SK-N-SH (cell line): ENCODE measurements at regions of chr7 and their contacts with region 1.

Region 1: DNA sequence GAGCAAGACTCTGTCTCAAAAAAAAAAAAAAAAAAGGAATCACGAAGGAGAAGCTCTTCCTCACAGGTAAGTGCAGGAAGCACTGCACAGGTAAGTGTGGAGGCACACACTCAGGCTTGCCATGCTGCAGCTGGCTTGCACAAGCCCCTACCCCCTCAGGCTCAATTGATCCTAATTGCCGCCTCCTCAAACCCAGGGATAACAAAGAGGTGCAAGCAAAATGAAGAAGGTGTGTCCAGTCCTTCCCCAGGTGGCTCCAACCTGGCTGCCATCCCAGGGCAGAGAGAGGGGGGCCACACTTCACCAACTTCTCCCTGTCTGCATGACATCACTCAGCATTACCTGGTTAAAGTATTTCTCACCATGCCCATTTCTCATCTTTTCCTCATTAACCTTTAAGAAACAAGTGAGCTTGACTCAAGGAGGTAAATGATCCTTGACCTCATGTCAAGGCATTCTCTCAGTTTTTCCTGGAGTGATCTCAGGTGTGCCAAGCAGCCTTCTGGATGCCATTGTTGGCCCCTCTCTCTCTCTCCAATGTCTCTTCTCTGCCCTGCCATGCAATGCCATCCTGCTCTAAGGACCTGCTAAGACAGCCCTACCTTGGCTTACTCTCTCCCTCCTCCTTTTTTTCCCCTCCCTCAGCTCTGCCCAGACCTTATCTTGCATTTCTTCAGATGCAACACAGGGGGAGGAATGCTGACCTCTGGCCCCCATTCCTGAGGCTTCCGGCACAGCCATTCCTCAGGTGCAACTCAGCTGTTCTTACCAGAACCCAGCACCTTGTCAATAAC is 13.0 kb upstream of the TRPV6 start:
- DNase-seq: no peak
- H3K4me3 ChIP-seq: no peak overlapping the region
- H3K27ac ChIP-seq: no peak overlapping the region
- H3K4me1 ChIP-seq: no peaks in the 10 kb centered on the region
- H3K27me3 ChIP-seq: peaks cover 43% of the 10 kb centered on the region
- CTCF ChIP-seq: no peak
- EP300 ChIP-seq: no peak
- RAD21 ChIP-seq: no peak

Region 2: GRCh38 chr7:142880876-142881505 is 17.6 kb before region 1 on chr7:
- CTCF ChIA-PET with region 1: interaction called, 17 read pairs
- POLR2A ChIA-PET with region 1: no interaction called
- DNase-seq: peak; percentile 73
- H3K4me3 ChIP-seq: no peak overlapping the region; a peak in 1 of 4 replicates
- H3K27ac ChIP-seq: no peak overlapping the region
- H3K4me1 ChIP-seq: no peaks in the 10 kb centered on the region
- H3K27me3 ChIP-seq: peaks cover 79% of the 10 kb centered on the region
- CTCF ChIP-seq: peak; percentile 75
- EP300 ChIP-seq: no peak
- RAD21 ChIP-seq: peak; percentile 48